Heart left ventricle (tissue), 16 donors: ENCODE measurements at regions of chr12 and their contacts with region 1.

Region 1: DNA sequence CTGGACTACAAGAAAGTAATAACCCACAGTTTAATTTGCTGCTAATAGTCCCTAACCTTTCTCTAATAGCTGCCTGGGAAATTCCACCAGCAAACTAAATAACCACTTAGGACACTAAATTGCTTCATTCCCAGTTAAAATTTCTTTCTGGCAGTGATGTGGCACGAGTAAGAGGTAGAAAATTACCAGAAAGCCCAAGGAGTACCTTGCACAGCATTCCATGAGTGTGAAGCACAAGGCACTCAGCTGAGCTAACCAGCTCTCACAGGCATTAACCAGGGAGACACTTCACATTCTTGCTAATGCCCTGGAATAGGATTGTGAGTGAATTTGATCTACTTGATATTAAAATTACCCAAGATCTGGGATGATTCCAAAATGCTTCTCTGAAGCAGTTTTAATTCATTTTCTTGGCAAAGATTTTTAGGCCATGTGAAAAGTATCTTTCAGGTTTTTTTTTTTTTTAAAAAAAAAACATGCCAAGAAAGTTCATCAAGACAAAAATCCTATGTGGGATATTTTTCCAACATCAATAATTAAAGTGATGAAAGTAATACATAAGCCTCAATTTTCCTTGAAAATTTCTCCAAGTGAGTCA is 29.5 kb downstream of the TSPAN8 start:
- DNase-seq: no peak
- ATAC-seq: no peak
- H3K4me3 ChIP-seq: no peak overlapping the region
- H3K27ac ChIP-seq: no peak overlapping the region
- H3K4me1 ChIP-seq: no peaks in the 10 kb centered on the region
- H3K27me3 ChIP-seq: no peaks in the 10 kb centered on the region
- CTCF ChIP-seq: no peak
- POLR2A ChIP-seq: no peak

Region 2: DNA sequence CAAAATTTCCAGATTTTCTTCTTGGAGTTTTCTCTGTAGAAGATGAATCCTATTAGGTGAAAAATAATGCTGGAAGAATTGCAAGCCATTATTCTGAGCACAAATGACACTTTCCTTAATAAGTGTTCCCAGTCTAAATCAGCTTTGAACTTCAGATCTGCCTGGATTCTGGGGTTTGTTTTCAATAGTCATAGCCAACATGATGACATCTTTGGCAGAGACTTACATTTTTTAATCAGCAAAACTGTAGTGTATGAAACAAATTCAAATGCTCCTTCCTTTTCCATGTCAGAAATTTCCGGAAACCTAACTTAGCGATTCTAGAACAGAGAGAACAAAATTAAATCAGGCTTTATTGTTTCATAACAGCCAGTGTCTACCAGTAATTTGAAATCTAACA is 59.0 kb before region 1 on chr12:
- intact Hi-C with region 1: loop called in 1 of 10 experiments (anchors 10 kb)
- DNase-seq: no peak
- ATAC-seq: no peak
- H3K4me3 ChIP-seq: no peak overlapping the region
- H3K27ac ChIP-seq: no peak overlapping the region
- H3K4me1 ChIP-seq: no peaks in the 10 kb centered on the region
- H3K27me3 ChIP-seq: no peaks in the 10 kb centered on the region
- CTCF ChIP-seq: no peak
- POLR2A ChIP-seq: no peak

Region 3: DNA sequence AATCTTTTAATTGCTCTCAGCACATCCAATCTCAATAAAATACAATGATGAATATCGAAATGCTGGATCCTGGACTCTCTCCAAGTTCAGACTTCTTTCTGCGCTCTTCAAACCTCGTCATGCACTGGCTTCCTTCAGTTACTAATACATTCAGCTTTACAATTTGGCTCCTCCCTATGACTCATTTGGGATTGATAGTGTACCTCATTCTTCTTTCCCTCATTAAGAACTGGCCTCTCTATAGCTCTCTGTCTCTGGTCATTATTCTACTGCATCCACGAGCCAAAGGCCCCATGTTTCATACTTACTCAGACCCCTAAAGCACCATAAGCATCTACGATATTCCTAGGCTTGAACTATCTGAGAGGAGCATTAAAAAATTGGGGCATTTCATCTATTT is 24.6 kb after region 1 on chr12:
- intact Hi-C with region 1: loop called in 1 of 10 experiments (anchors 2 kb)
- DNase-seq: no peak
- ATAC-seq: no peak
- H3K4me3 ChIP-seq: no peak overlapping the region
- H3K27ac ChIP-seq: no peak overlapping the region
- H3K4me1 ChIP-seq: no peaks in the 10 kb centered on the region
- H3K27me3 ChIP-seq: no peaks in the 10 kb centered on the region
- CTCF ChIP-seq: no peak
- POLR2A ChIP-seq: no peak